Thyroid gland (tissue), 4 donors: ENCODE measurements at regions of chr10 and their contacts with region 1.

Region 1: GRCh38 chr10:47311932-47312662 is 10.2 kb upstream of the GDF2 start:
- DNase-seq: peak; percentile 88 to 89
- H3K4me3 ChIP-seq: no peak overlapping the region
- H3K27ac ChIP-seq: no peak overlapping the region
- H3K4me1 ChIP-seq: peaks cover 0 to 29% of the 10 kb centered on the region in 2 donors
- H3K27me3 ChIP-seq: no peaks in the 10 kb centered on the region
- CTCF ChIP-seq: peak; percentile 61 to 91 (median 82)
- POLR2A ChIP-seq: no peak

Region 2: DNA sequence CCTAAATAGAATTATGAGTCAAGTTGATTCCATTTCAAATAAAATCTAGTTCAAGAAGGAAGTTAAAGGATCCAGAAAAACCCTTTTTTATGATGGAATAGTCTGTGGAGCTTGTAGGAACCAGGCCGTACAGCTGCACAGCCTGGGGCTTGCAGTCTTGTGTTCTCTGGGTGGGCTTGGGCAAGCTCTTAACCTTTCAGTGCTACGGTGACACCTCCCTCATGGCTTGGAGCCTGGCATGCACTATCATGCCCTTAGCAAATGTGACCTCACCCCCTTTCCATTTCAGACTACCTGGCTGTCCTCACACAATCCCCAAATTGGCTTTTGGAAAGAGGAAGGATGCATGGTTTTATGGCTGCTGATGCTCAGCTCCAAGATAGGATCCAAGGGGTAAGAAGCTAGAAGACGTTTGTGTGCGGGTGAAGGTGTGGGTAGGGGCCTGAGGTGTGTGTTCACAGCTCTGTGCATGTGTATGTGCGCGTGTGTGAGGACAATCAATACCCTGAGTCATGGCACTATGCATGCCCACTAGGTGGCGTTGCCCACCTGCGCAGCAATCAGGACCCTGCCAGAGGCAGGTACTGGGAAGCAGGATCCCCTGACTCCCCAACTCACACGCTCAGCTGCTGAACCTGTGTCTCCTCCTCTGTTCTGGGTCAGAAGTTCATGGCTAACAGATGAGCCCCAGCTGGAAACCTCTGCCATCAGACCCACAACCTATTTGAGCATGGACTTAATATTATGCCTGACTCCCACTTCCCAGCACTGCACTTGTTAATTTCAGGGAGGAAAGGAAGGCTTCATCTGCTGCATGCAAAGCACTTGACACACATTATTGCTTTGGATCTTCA is 287.5 kb before region 1 on chr10:
- intact Hi-C with region 1: loop called (anchors 5 kb)
- DNase-seq: peak; percentile 69 to 71
- H3K4me3 ChIP-seq: no peak overlapping the region
- H3K27ac ChIP-seq: no peak overlapping the region
- H3K4me1 ChIP-seq: no peaks in the 10 kb centered on the region
- H3K27me3 ChIP-seq: no peaks in the 10 kb centered on the region
- CTCF ChIP-seq: peak; percentile 31 to 89 (median 67)
- POLR2A ChIP-seq: no peak

Region 3: DNA sequence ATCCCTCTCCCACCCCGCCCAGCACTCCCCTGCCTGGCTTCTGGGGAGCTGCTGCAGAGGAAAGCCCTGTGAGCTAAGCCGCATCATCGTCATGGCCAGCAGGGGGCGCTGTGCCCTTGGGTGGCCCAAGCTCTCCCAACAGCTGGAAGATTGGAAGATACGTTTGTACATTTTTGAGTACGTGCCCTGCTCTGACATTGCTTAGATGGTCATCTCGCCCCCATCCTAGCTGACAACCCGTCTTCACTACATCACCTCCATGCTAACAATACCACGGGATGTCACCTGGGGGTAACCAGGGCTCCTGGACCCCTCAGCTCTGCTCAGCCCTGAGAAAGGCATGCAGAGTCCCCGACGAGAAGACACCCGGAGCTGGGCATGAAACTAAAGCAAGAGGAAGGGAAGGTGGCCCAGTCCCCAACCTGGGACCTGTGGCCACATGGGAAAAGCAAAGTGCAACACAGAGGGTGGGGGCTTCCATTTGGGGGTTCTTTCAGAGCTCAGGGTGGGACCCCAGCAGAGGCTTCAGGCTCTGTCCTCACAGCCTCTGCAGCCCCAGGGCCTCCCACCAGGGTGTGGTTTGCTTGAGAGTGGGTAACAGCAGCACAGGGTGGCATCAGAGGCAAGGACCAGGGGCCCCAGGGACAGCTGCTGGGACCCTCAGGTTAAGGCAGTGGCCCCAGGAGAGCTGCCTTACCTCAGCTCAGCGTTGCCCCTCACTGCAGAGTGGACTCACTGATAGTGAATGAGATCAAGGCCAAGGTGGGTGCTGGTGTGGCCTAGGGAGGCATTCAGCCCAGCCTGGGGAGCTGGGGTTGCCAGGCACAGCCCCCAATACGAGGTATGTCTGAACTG is 264.2 kb before region 1 on chr10:
- intact Hi-C with region 1: loop called (anchors 2 kb)
- DNase-seq: peak; percentile 78 to 80
- H3K4me3 ChIP-seq: no peak overlapping the region
- H3K27ac ChIP-seq: no peak overlapping the region
- H3K4me1 ChIP-seq: no peaks in the 10 kb centered on the region
- H3K27me3 ChIP-seq: no peaks in the 10 kb centered on the region
- CTCF ChIP-seq: peak; percentile 54 to 91 (median 74)
- POLR2A ChIP-seq: no peak